ENCODE measurements at regions of chr18 and their contacts with region 1.

Region 1: DNA sequence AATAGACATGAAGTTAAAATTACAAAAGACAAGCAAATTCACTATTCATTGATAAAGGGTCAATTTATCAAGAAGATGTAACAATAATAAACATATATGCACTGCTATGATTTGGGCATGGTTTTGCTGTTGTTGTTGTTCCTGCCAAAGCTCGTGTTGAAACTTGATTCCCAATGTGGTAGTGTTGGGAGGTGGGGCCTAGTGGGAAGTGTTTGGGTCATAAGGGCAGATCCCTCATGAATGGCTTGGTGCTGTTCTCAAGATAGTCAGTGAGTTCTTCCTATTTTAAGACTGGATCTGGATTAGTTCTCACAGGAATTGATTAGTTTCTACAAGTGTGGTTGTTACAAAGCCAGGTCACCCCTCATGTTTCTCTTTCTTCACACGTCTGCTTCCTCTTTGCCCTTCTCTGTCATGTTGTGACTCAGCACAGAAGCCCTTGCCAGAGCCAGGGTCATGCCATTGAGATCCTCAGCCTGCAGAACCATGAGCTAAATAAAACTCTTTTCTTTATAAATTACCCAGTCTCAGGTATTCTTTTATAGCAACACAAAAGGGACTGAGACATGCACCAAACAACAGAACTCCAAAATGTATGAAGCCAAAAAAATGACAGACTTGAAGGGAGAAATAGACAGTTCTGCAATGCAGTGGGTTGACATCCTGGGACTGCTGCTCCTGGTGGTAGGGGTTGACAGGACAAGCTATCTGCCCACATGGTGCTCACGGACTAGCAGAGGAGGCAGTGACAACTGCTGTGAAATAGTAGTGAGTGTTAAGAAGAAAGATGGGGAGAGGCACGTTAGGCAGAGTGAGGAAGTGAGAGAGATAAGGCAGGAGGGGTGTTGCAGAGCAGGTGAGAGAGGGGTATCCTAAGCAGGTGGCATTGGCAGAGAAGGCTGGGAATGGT is 18.6 kb upstream of the SKA1 start:
- DNase-seq: no peak
- H3K4me3 ChIP-seq: no peak overlapping the region
- H3K27me3 ChIP-seq: no peaks in the 10 kb centered on the region; the same call in 1 of the 2 replicates
- CTCF ChIP-seq: no peak

Region 2: GRCh38 chr18:50203801-50204604 is 152.3 kb before region 1 on chr18:
- CTCF ChIA-PET with region 1: interaction called, 11 read pairs
- POLR2A ChIA-PET with region 1: no interaction called
- DNase-seq: no peak
- H3K4me3 ChIP-seq: no peak overlapping the region
- H3K27me3 ChIP-seq: peaks cover 3% of the 10 kb centered on the region; the same call in 1 of the 2 replicates
- CTCF ChIP-seq: peak; percentile 64

Region 3: GRCh38 chr18:50218432-50219197 is 137.7 kb before region 1 on chr18:
- CTCF ChIA-PET with region 1: interaction called, 36 read pairs
- POLR2A ChIA-PET with region 1: no interaction called
- DNase-seq: no peak
- H3K4me3 ChIP-seq: no peak overlapping the region
- H3K27me3 ChIP-seq: no peaks in the 10 kb centered on the region
- CTCF ChIP-seq: peak; percentile 31

Region 4: DNA sequence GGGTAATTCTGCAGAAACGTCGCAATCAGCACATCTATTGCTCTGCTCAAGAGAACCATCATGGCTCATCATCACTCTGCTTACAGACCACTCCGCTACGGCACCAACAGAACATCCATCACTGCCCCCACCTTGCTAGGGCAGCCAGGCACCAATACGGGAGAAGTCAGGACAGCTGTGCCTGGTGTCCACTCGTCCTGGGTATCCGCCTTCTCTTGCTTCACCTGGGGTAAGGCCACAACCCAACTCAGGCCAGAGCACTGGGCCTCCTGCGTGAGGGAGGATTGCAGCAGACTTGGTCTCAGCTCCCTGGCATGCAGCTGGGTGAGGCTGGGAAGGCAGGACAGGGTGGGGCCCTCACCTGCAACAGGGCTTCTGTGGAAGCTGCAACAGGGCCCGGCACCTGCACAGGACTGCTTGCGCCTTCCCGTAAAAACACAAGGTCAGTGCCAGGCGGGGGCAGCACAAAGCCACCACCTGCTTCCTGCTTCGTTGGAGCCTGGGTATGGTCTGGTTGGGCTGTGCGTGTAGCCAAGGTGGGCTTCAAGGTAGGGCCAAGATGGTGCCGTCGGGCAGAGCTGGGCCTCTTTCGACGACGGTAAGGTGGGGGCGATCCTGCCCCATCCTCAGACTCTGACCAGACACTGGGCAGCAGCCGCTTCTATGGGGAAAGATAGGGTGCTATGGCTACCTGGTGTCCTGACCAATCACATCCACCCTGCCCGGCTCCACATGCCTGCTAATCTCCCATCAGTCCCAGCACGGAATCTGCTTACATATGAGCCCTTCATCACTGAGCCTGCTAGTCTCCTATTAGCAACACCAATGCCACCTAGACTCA is 82.9 kb before region 1 on chr18:
- CTCF ChIA-PET with region 1: no interaction called
- POLR2A ChIA-PET with region 1: no interaction called
- DNase-seq: no peak
- H3K4me3 ChIP-seq: no peak overlapping the region
- H3K27me3 ChIP-seq: no peaks in the 10 kb centered on the region
- CTCF ChIP-seq: no peak

Region 5: DNA sequence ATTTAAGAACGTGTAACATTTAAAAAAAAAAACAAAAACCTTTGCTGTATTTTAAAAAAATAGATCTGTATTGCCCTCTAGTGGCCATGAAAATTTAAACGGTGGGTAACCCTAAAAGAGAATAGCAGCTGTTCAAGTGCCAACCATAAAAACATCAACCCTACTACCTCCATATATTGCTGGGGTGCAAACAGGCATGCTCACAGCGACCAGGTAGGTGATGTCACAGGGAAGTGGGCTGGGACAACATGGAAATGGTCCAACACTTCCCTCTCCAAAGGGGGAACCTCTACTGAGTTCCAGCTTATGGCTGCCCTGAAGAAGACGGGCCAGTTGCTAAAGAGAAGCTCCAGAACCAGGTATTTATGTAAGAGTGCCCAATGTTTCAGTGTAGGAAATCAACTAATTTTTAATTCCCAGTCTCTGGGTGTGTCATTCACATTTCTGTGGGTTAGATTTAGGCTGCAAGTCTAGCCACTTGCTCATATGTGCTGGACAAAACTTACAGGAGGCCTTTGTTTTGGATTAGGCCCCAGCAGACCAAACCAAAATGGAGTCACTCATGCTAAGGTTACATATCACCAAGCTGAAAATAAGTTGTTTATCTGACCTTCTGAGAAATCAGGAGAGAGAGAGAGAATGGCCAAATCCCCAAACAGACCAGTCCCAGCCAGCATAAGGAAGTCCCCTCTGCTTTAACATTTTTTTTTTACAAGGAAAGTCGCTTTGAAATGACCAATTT is 73.1 kb after region 1 on chr18:
- CTCF ChIA-PET with region 1: interaction called, 12 read pairs
- POLR2A ChIA-PET with region 1: no interaction called
- DNase-seq: no peak
- H3K4me3 ChIP-seq: no peak overlapping the region
- H3K27me3 ChIP-seq: no peaks in the 10 kb centered on the region
- CTCF ChIP-seq: peak; percentile 44